ENCODE measurements at regions of chr2 and their contacts with region 1.

Region 1: DNA sequence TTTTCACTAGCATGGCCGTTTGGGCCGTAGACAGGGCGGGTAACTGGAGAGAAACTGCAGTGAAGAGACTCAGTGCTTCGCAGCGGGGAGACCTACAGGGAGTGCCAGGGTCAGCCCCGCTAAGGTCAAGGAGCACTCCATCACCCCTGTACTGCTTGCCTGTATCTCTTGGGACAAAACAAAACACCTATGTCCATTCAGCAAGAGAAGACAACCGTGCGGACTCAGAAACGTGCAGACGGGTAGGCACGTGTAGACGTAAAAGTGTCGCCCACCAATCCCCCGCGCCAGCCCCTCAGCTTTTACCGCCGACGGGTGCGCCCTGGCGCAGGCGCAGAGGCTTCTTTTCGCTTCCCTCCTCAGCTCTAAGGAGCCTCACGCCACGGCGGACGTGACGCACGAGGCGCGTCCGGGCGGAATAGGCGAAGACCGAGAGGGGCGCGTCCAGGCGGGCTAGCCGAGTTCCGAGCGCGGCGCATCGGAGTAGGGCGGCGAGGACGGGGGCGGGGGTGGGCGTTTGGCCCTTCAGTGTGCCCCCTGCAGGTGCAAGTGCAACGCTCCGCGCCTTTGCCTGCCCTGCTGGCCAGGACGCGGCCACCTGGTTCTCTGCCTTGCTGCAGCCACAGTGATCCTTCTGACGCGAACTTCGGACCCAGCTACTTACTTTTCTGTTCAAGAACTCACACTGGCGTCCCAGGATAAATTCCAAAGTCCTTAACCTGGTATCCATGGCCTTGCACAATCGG is 3.3 kb upstream of the SOS1 start:
- DNase-seq: peak; percentile 97
- ATAC-seq: peak; percentile 79
- H3K4me3 ChIP-seq: peak overlapping the region; percentile 81 to 82 (median 81)
- H3K27ac ChIP-seq: peak overlapping the region; percentile 93
- H3K4me1 ChIP-seq: peaks cover 47% of the 10 kb centered on the region
- H3K27me3 ChIP-seq: no peaks in the 10 kb centered on the region; a peak in 1 of 5 replicates
- CTCF ChIP-seq: peak; percentile 93
- EP300 ChIP-seq: peak; percentile 43 to 78; a peak in 2 of 4 replicates
- POLR2A ChIP-seq: peak; percentile 85 to 90
- RAD21 ChIP-seq: peak; percentile 72

Region 2: GRCh38 chr2:39059366-39059952 is 64.7 kb before region 1 on chr2:
- CTCF ChIA-PET with region 1: interaction called, 6 read pairs
- POLR2A ChIA-PET with region 1: interaction called, 3 read pairs
- in situ Hi-C with region 1: loop called (anchors 10 kb)
- intact Hi-C with region 1: loop called (anchors 2 kb)
- DNase-seq: peak; percentile 62
- ATAC-seq: no peak
- H3K4me3 ChIP-seq: no peak overlapping the region
- H3K27ac ChIP-seq: no peak overlapping the region
- H3K4me1 ChIP-seq: no peaks in the 10 kb centered on the region
- H3K27me3 ChIP-seq: no peaks in the 10 kb centered on the region
- CTCF ChIP-seq: peak; percentile 64
- EP300 ChIP-seq: no peak
- POLR2A ChIP-seq: no peak
- RAD21 ChIP-seq: peak; percentile 64

Region 3: DNA sequence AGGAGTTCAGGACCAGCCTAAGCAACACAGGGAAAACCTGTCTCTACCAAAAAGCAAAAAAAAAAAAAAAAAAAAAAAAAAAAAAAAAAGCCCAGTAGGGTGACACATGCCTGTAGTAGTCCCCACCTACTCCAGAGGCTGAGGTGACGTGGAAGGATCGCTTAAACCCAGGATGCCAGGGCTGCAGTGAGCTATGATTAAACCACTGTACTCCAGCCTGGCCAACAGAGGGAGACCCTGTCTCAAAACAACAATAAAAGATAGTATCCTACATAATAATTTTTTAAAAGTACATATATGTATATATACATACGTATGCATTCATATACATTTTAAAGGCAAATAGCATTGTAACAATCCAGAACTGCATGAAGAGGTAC is 55.0 kb before region 1 on chr2:
- CTCF ChIA-PET with region 1: no interaction called
- POLR2A ChIA-PET with region 1: interaction called, 3 read pairs
- in situ Hi-C with region 1: loop called (anchors 10 kb)
- intact Hi-C with region 1: loop called (anchors 2 kb)
- DNase-seq: no peak
- ATAC-seq: peak; percentile 73; the same call in 2 of the 3 replicates
- H3K4me3 ChIP-seq: no peak overlapping the region
- H3K27ac ChIP-seq: no peak overlapping the region
- H3K4me1 ChIP-seq: no peaks in the 10 kb centered on the region
- H3K27me3 ChIP-seq: no peaks in the 10 kb centered on the region
- CTCF ChIP-seq: no peak
- EP300 ChIP-seq: no peak
- POLR2A ChIP-seq: no peak
- RAD21 ChIP-seq: no peak

Region 4: DNA sequence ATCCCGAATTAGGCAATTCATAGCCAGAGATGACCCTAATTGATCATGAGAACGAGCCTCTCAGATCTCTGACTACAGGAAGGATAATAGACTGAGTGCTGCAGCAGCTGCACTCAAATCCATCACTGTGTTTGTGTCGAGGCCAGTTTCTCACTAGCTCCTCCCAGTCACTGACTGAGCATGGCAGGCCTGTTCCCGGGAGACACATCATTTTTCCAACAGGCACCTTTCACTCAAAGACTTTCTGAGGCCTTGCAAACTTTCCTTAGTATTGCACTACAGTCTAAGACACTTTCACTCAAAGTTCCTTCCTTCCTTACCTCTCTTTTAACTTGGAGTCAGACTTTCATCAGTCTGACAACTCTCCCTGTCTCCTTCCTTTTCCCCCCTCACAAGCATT is 17.0 kb before region 1 on chr2:
- CTCF ChIA-PET with region 1: no interaction called
- POLR2A ChIA-PET with region 1: interaction called, 25 read pairs
- in situ Hi-C with region 1: no loop called
- intact Hi-C with region 1: no loop called
- DNase-seq: no peak
- ATAC-seq: peak; percentile 62
- H3K4me3 ChIP-seq: no peak overlapping the region
- H3K27ac ChIP-seq: no peak overlapping the region
- H3K4me1 ChIP-seq: peaks cover 18% of the 10 kb centered on the region
- H3K27me3 ChIP-seq: no peaks in the 10 kb centered on the region
- CTCF ChIP-seq: no peak
- EP300 ChIP-seq: no peak
- POLR2A ChIP-seq: no peak
- RAD21 ChIP-seq: no peak

Region 5: GRCh38 chr2:39135690-39136259 is 11.6 kb after region 1 on chr2:
- CTCF ChIA-PET with region 1: no interaction called
- POLR2A ChIA-PET with region 1: interaction called, 58 read pairs
- in situ Hi-C with region 1: no loop called
- intact Hi-C with region 1: loop called (anchors 1 kb)
- DNase-seq: no peak
- ATAC-seq: no peak
- H3K4me3 ChIP-seq: no peak overlapping the region
- H3K27ac ChIP-seq: peak overlapping the region; percentile 25
- H3K4me1 ChIP-seq: peaks cover 64% of the 10 kb centered on the region
- H3K27me3 ChIP-seq: no peaks in the 10 kb centered on the region
- CTCF ChIP-seq: no peak
- EP300 ChIP-seq: no peak
- POLR2A ChIP-seq: no peak
- RAD21 ChIP-seq: no peak

Region 6: GRCh38 chr2:39150874-39151497 is 26.8 kb after region 1 on chr2:
- CTCF ChIA-PET with region 1: no interaction called
- POLR2A ChIA-PET with region 1: interaction called, 10 read pairs
- in situ Hi-C with region 1: no loop called
- intact Hi-C with region 1: loop called (anchors 1 kb)
- DNase-seq: peak; percentile 67
- ATAC-seq: peak; percentile 97
- H3K4me3 ChIP-seq: no peak overlapping the region
- H3K27ac ChIP-seq: no peak overlapping the region
- H3K4me1 ChIP-seq: peaks cover 22% of the 10 kb centered on the region
- H3K27me3 ChIP-seq: no peaks in the 10 kb centered on the region
- CTCF ChIP-seq: 0 out of 2 replicates have a peak, but pooled peaks have one; percentile 17
- EP300 ChIP-seq: peak in 1 of 2 experiments; percentile 88; a peak in 2 of 4 replicates
- POLR2A ChIP-seq: no peak
- RAD21 ChIP-seq: peak; percentile 30; the same call in 1 of the 2 replicates

Region 7: GRCh38 chr2:39227628-39228412 is 103.6 kb after region 1 on chr2:
- CTCF ChIA-PET with region 1: interaction called, 53 read pairs
- POLR2A ChIA-PET with region 1: interaction called, 71 read pairs
- in situ Hi-C with region 1: loop called (anchors 5 kb)
- intact Hi-C with region 1: loop called (anchors 1 kb)
- DNase-seq: peak; percentile 73
- ATAC-seq: peak; percentile 88
- H3K4me3 ChIP-seq: peak overlapping the region; percentile 58 to 73 (median 68); a peak in 5 of 6 replicates
- H3K27ac ChIP-seq: peak overlapping the region; percentile 39
- H3K4me1 ChIP-seq: peaks cover 29% of the 10 kb centered on the region
- H3K27me3 ChIP-seq: no peaks in the 10 kb centered on the region
- CTCF ChIP-seq: peak; percentile 93
- EP300 ChIP-seq: no peak
- POLR2A ChIP-seq: no peak
- RAD21 ChIP-seq: peak; percentile 84

Measured in HepG2 (cell line).